Activated B cell treated with CpG ODN at 0.5 μM for 24 hours (primary cell): ENCODE measurements at regions of chr1 and their contacts with region 1.

Region 1: GRCh38 chr1:111399792-111400610 is 27.5 kb downstream of the OVGP1 start:
- DNase-seq: no peak
- ATAC-seq: no peak
- H3K4me3 Mint-ChIP-seq: no peak overlapping the region
- H3K27ac Mint-ChIP-seq: no peak overlapping the region
- H3K4me1 Mint-ChIP-seq: peaks cover 22% of the 10 kb centered on the region
- H3K27me3 Mint-ChIP-seq: no peaks in the 10 kb centered on the region
- CTCF ChIP-seq: peak; percentile 79

Region 2: GRCh38 chr1:111227851-111228747 is 171.9 kb before region 1 on chr1:
- CTCF ChIA-PET with region 1: interaction called, 69 read pairs
- POLR2A ChIA-PET with region 1: interaction called, 5 read pairs
- intact Hi-C with region 1: loop called (anchors 1 kb)
- DNase-seq: no peak
- ATAC-seq: no peak
- H3K4me3 Mint-ChIP-seq: no peak overlapping the region
- H3K27ac Mint-ChIP-seq: peak overlapping the region; percentile 69
- H3K4me1 Mint-ChIP-seq: peaks cover 83% of the 10 kb centered on the region
- H3K27me3 Mint-ChIP-seq: no peaks in the 10 kb centered on the region
- CTCF ChIP-seq: no peak

Region 3: GRCh38 chr1:111441573-111442192 is 41.7 kb after region 1 on chr1:
- CTCF ChIA-PET with region 1: no interaction called
- POLR2A ChIA-PET with region 1: no interaction called
- intact Hi-C with region 1: no loop called
- DNase-seq: peak; percentile 40
- ATAC-seq: peak; percentile 91
- H3K4me3 Mint-ChIP-seq: no peak overlapping the region
- H3K27ac Mint-ChIP-seq: no peak overlapping the region
- H3K4me1 Mint-ChIP-seq: peaks cover 19% of the 10 kb centered on the region
- H3K27me3 Mint-ChIP-seq: no peaks in the 10 kb centered on the region
- CTCF ChIP-seq: no peak

Region 4: DNA sequence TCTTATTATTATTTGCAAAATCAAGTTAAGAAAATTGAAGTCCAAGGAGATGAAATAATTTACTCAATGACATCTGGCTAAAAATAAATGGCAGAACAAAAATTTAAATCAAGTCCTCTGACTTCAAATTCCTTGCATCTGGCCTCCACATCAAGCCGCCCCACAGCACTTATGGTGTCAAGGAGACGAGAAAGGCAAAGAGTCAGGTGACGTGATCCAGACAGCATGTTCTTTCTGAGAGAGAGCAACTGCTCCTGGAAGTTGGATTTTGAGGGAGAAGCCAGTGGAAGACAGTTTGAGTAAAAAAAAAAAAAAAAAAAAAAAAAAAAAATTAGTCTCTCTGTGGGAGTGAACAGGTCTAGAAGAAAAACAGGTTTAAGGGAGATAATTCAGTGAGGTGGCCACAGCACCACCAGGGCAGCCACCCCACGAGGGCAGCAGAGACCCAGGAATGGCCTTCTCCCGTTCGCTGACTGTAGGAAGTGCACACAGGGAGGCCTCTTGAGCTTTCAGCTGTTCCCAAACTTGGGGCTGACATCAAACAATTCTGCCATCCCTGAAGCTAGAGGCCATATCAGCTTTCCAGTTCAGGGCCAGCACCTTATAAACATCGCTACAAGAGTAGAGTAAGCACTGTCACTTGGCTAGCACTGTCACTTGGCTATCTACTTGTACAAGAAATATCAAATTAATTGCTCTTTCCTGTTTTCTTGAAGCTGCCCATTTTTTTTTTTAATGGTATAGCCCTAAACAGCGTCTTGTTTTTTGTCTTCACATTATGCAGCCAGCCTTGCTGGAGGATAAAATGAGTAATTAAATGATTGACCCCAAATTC is 81.6 kb after region 1 on chr1:
- CTCF ChIA-PET with region 1: no interaction called
- POLR2A ChIA-PET with region 1: no interaction called
- intact Hi-C with region 1: no loop called
- DNase-seq: no peak
- ATAC-seq: peak; percentile 73
- H3K4me3 Mint-ChIP-seq: no peak overlapping the region
- H3K27ac Mint-ChIP-seq: no peak overlapping the region
- H3K4me1 Mint-ChIP-seq: peaks cover 42% of the 10 kb centered on the region
- H3K27me3 Mint-ChIP-seq: no peaks in the 10 kb centered on the region
- CTCF ChIP-seq: no peak